ENCODE measurements at regions of chr14 and their contacts with region 1.

Region 1: DNA sequence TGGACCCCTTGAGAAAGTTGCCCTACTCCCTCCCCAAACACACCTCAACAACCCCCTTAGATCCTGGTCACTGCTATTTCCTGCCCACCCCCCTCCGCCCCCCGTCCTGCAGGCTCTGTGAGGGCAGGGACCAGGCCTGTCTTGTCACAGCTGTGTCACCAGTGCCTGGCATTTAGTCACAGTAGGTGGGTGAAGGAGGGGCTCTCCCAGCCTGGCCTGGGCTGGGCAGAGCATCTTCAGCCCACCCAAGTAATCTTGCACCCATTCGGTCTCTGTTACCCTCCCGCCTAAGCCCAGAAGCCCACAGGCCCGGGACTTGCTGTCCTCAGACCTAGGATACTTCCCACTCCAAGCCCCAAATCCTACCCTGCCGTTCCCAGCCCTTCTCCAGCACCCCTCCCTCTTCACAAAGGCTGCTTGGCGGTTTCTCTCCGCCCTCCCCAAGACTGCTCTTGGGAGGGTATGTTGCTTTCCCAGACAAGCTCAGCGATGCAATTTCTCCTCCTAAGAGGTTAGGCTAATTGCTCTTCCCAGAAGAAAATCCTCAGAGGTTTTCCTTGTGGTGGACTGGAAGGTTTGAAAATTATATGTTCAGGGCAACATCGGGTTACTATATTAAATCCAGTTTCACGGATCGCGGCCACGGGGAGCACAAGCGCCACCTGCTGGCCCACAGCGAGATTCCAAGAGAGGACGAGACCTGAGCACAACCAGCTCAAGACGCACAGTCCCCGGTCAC is 50.8 kb upstream of the ZFP36L1 start:
- DNase-seq: no peak
- ATAC-seq: peak; percentile 91
- H3K4me3 ChIP-seq: peak overlapping the region; percentile 25; the same call in 1 of the 2 replicates
- H3K27ac ChIP-seq: no peak overlapping the region
- H3K4me1 ChIP-seq: peaks cover 10% of the 10 kb centered on the region; the same call in 1 of the 2 replicates
- H3K27me3 ChIP-seq: no peaks in the 10 kb centered on the region
- CTCF ChIP-seq: peak; percentile 90 to 91 (median 90)
- EP300 ChIP-seq: no peak
- POLR2A ChIP-seq: no peak
- RAD21 ChIP-seq: peak; percentile 74

Region 2: DNA sequence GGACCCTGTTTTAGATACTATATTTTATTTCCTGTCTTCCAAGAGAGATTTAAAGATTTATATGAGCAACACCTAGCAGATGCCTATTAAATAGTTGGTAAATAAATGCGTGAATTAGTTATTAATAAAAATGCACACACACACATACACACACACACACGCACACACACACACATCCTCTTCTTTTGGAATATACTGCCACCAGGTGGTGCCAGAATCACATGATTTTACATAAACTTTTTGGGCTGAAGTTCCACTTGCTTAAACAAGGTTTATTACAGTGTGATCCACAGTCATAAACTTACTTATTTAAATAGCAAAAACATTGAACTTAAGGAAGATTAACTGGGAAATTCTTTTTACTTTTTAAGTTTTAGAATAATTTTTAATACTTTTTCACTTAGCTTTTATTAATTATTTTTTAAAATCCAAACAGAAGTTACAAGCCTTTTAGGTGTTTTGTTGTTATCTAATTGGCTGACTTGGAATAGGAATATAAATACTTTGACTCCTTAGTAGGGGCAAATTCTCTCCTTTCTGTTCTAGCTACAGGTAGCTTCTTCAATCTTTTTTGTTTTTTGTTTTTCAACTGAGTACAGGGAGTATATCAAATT is 1006.5 kb before region 1 on chr14:
- CTCF ChIA-PET with region 1: interaction called, 14 read pairs
- POLR2A ChIA-PET with region 1: no interaction called
- RAD21 ChIA-PET with region 1: interaction called, 5 read pairs
- SMC1A ChIA-PET with region 1: interaction called, 9 read pairs
- in situ Hi-C with region 1: no loop called
- intact Hi-C with region 1: loop called (anchors 10 kb)
- DNase-seq: peak; percentile 34
- ATAC-seq: peak; percentile 76
- H3K4me3 ChIP-seq: no peak overlapping the region
- H3K27ac ChIP-seq: no peak overlapping the region
- H3K4me1 ChIP-seq: no peaks in the 10 kb centered on the region
- H3K27me3 ChIP-seq: no peaks in the 10 kb centered on the region
- CTCF ChIP-seq: peak; percentile 55 to 79 (median 65); a peak in 5 of 6 replicates
- EP300 ChIP-seq: no peak
- POLR2A ChIP-seq: no peak
- RAD21 ChIP-seq: peak; percentile 85

Region 3: GRCh38 chr14:67883717-67884116 is 959.9 kb before region 1 on chr14:
- CTCF ChIA-PET with region 1: interaction called, 12 read pairs
- POLR2A ChIA-PET with region 1: no interaction called
- RAD21 ChIA-PET with region 1: interaction called, 6 read pairs
- SMC1A ChIA-PET with region 1: interaction called, 10 read pairs
- in situ Hi-C with region 1: no loop called
- intact Hi-C with region 1: no loop called
- DNase-seq: no peak
- ATAC-seq: no peak
- H3K4me3 ChIP-seq: no peak overlapping the region
- H3K27ac ChIP-seq: no peak overlapping the region
- H3K4me1 ChIP-seq: peaks cover 17% of the 10 kb centered on the region
- H3K27me3 ChIP-seq: no peaks in the 10 kb centered on the region
- CTCF ChIP-seq: peak in 1 of 3 experiments; percentile 7; a peak in 1 of 6 replicates
- EP300 ChIP-seq: no peak
- POLR2A ChIP-seq: no peak
- RAD21 ChIP-seq: no peak

Region 4: GRCh38 chr14:68766299-68767230 is 77.1 kb before region 1 on chr14:
- CTCF ChIA-PET with region 1: no interaction called
- POLR2A ChIA-PET with region 1: no interaction called
- RAD21 ChIA-PET with region 1: no interaction called
- SMC1A ChIA-PET with region 1: no interaction called
- in situ Hi-C with region 1: no loop called
- intact Hi-C with region 1: no loop called
- DNase-seq: no peak
- ATAC-seq: no peak; the same call in 2 of the 3 replicates
- H3K4me3 ChIP-seq: no peak overlapping the region
- H3K27ac ChIP-seq: no peak overlapping the region
- H3K4me1 ChIP-seq: no peaks in the 10 kb centered on the region
- H3K27me3 ChIP-seq: no peaks in the 10 kb centered on the region
- CTCF ChIP-seq: no peak
- EP300 ChIP-seq: no peak
- POLR2A ChIP-seq: no peak
- RAD21 ChIP-seq: no peak

Region 5: DNA sequence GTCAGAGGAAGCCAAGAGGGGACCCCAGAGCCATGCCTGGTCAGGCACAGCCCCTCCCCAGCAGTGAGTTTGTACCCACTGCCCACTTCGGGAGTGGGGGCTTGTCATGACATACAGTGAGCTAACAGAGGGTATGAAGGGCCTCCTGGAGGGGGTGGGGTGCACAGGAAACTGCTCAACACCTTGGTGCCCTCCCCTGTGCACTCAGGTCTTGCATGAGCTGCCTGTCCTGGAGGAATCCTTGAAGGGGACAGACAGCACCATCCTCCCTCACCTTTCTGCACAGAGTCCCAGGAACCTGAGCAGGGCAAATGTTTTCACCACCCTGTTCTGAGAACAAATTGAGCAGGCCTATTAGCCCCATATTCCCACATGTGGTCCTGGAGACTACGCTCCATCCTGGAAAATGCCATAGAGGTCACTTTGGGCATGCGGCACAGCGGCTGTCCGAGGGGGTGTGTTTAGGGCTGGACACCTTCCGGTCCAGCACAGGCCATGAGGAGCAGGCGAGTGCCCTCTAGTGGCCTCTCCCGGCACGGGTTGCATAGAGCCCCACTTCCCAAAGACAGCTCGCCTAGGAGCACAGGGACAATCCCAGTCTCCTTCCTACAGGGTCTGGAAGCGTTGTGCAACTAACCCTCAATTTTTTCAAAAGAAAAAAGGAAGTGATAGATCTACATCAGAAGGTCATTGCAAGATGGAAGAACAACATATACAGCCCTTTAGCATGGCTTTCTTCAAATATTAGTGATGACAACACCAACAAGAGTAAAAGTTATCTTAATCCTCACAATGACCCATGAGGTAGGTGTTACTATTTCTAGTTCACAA is 18.9 kb before region 1 on chr14:
- CTCF ChIA-PET with region 1: interaction called, 231 read pairs
- POLR2A ChIA-PET with region 1: interaction called, 3 read pairs
- RAD21 ChIA-PET with region 1: interaction called, 20 read pairs
- SMC1A ChIA-PET with region 1: interaction called, 41 read pairs
- in situ Hi-C with region 1: no loop called
- intact Hi-C with region 1: loop called (anchors 1 kb)
- DNase-seq: no peak
- ATAC-seq: peak; percentile 10; the same call in 1 of the 3 replicates
- H3K4me3 ChIP-seq: no peak overlapping the region
- H3K27ac ChIP-seq: no peak overlapping the region; the same call in 1 of the 2 replicates
- H3K4me1 ChIP-seq: peaks cover 50% of the 10 kb centered on the region
- H3K27me3 ChIP-seq: no peaks in the 10 kb centered on the region
- CTCF ChIP-seq: peak; percentile 90 to 93 (median 90)
- EP300 ChIP-seq: no peak
- POLR2A ChIP-seq: no peak
- RAD21 ChIP-seq: peak; percentile 64; the same call in 1 of the 2 replicates

Region 6: GRCh38 chr14:68854421-68854820 is 10.8 kb after region 1 on chr14:
- CTCF ChIA-PET with region 1: interaction called, 13 read pairs
- POLR2A ChIA-PET with region 1: no interaction called
- RAD21 ChIA-PET with region 1: no interaction called
- SMC1A ChIA-PET with region 1: no interaction called
- in situ Hi-C with region 1: no loop called
- intact Hi-C with region 1: no loop called
- DNase-seq: no peak
- ATAC-seq: peak; percentile 85
- H3K4me3 ChIP-seq: no peak overlapping the region
- H3K27ac ChIP-seq: no peak overlapping the region
- H3K4me1 ChIP-seq: no peaks in the 10 kb centered on the region
- H3K27me3 ChIP-seq: no peaks in the 10 kb centered on the region
- CTCF ChIP-seq: no peak
- EP300 ChIP-seq: no peak
- POLR2A ChIP-seq: no peak
- RAD21 ChIP-seq: no peak

Region 7: GRCh38 chr14:68862954-68863594 is 19.4 kb after region 1 on chr14:
- CTCF ChIA-PET with region 1: interaction called, 9 read pairs
- POLR2A ChIA-PET with region 1: no interaction called
- RAD21 ChIA-PET with region 1: no interaction called
- SMC1A ChIA-PET with region 1: interaction called, 10 read pairs
- in situ Hi-C with region 1: no loop called
- intact Hi-C with region 1: no loop called
- DNase-seq: peak; percentile 32
- ATAC-seq: peak; percentile 90
- H3K4me3 ChIP-seq: no peak overlapping the region
- H3K27ac ChIP-seq: no peak overlapping the region
- H3K4me1 ChIP-seq: no peaks in the 10 kb centered on the region; the same call in 1 of the 2 replicates
- H3K27me3 ChIP-seq: no peaks in the 10 kb centered on the region
- CTCF ChIP-seq: peak; percentile 69 to 78 (median 75)
- EP300 ChIP-seq: no peak
- POLR2A ChIP-seq: no peak
- RAD21 ChIP-seq: peak; percentile 80